ENCODE measurements at regions of chr6 and their contacts with region 1.

Region 1: DNA sequence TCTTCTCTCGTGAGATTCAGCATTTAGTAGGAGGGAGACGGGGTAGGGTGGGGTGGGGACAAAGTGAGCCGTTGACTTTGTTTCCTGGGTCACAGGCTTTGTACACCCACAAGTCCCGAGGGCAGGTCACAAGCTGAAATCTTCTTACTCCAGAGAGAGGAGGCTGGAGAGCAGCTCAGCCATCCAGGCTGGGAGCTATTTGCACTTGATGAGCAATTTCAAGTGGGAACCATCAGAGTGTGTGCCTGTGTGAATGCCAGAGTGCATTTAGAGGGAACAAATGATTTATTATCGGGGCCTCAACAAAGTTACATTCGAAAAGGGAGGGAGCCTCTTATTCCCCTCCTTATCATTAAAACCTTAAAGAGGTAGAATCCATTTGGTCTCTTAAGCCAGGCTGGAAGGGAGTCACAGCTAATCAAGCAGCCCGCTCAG is 155.7 kb upstream of the JARID2 start:
- DNase-seq: peak in 2 of 4 experiments; percentile 90 to 93
- ATAC-seq: peak; percentile 76
- H3K4me3 ChIP-seq: peak overlapping the region; percentile 48
- H3K27ac ChIP-seq: peak overlapping the region; percentile 96
- H3K4me1 ChIP-seq: peaks cover 28 to 49% of the 10 kb centered on the region in 2 experiments
- H3K27me3 ChIP-seq: no peaks in the 10 kb centered on the region; a peak in 1 of 5 replicates
- CTCF ChIP-seq: no peak
- EP300 ChIP-seq: peak; percentile 52
- POLR2A ChIP-seq: peak; percentile 82
- RAD21 ChIP-seq: peak; percentile 18 to 29; a peak in 2 of 4 replicates

Region 2: GRCh38 chr6:14734416-14735340 is 355.5 kb before region 1 on chr6:
- CTCF ChIA-PET with region 1: no interaction called
- POLR2A ChIA-PET with region 1: no interaction called
- in situ Hi-C with region 1: no loop called
- intact Hi-C with region 1: loop called (anchors 10 kb)
- DNase-seq: peak; percentile 70 to 95 (median 78)
- ATAC-seq: peak; percentile 90
- H3K4me3 ChIP-seq: no peak overlapping the region
- H3K27ac ChIP-seq: peak overlapping the region; percentile 93
- H3K4me1 ChIP-seq: peaks cover 6 to 64% of the 10 kb centered on the region in 2 experiments; a peak in 4 of 5 replicates
- H3K27me3 ChIP-seq: no peaks in the 10 kb centered on the region
- CTCF ChIP-seq: no peak
- EP300 ChIP-seq: peak; percentile 99
- POLR2A ChIP-seq: no peak
- RAD21 ChIP-seq: peak; percentile 42 to 48

Region 3: DNA sequence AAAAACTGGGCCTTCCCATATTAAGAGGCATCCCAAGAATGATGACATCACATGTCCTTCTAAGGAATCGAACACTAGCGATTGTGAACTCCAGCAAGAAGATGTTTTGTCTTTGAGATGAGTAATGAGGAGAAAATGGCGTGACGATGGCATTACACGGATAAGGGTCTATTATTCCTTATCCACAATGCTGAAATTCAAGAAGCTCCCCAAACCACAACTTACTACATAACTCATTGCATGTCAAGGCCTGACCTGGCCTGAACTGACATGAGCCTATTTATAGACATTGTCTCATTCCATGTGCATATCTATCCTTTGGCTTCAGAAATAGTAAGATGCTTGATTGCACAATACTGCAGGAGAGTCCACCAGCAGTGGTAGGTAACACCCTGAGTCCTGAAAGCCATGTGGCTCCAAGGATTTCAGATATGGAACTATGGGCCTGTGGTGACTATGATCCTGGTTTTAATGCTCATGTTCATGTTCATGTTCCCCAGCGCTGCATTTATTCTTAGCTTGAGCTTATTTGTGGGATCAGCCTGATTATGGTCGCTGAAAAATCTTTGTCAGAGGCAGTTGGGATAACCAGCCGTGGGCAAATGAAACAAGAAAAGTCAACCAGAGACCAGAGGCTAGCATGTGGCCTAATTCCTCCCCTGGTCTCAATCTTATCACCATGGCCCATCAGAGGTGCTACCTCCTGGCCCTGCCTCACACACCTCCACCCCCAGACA is 27.5 kb before region 1 on chr6:
- CTCF ChIA-PET with region 1: no interaction called
- POLR2A ChIA-PET with region 1: interaction called, 4 read pairs
- in situ Hi-C with region 1: no loop called
- intact Hi-C with region 1: loop called (anchors 2 kb)
- DNase-seq: peak; percentile 48 to 91 (median 68)
- ATAC-seq: peak; percentile 78
- H3K4me3 ChIP-seq: no peak overlapping the region
- H3K27ac ChIP-seq: peak overlapping the region; percentile 85
- H3K4me1 ChIP-seq: peaks cover 35 to 49% of the 10 kb centered on the region in 2 experiments
- H3K27me3 ChIP-seq: no peaks in the 10 kb centered on the region
- CTCF ChIP-seq: no peak
- EP300 ChIP-seq: peak; percentile 94
- POLR2A ChIP-seq: no peak
- RAD21 ChIP-seq: peak in 1 of 2 experiments; percentile 40; a peak in 3 of 4 replicates

Region 4: GRCh38 chr6:15102241-15102640 is 12.1 kb after region 1 on chr6:
- CTCF ChIA-PET with region 1: no interaction called
- POLR2A ChIA-PET with region 1: interaction called, 35 read pairs
- in situ Hi-C with region 1: no loop called
- intact Hi-C with region 1: no loop called
- DNase-seq: no peak
- ATAC-seq: no peak
- H3K4me3 ChIP-seq: no peak overlapping the region
- H3K27ac ChIP-seq: no peak overlapping the region
- H3K4me1 ChIP-seq: peaks cover 12 to 17% of the 10 kb centered on the region in 2 experiments; a peak in 4 of 5 replicates
- H3K27me3 ChIP-seq: no peaks in the 10 kb centered on the region
- CTCF ChIP-seq: no peak
- EP300 ChIP-seq: no peak
- POLR2A ChIP-seq: no peak
- RAD21 ChIP-seq: no peak

Region 5: DNA sequence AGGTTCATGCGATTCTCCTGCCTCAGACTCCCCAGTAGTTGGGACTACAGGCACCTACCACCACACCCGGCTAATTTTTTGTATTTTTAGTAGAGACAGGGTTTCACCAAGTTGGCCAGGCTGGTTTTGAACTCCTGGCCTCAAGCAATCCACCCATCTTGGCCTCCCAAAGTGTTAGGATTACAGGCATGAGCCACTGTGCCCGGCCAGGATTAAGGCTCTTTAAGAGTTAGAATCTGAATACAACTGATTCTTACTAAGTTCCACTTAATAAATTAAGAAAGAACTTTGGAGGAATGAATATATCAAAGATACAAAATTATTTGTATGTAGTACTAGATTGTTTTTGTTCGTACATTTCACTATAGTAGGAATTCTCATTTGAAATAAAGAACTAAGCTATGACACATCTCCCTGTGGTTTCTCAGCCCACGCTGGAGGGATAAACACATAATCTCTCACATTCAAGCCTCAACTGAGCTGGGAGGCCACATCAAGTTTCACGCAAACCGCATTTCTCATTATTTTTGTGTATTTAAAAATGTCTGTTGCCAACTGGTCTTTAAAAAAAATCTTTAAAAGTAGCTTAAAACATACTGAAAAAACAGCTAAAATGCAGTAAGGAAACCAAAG is 538.5 kb after region 1 on chr6:
- CTCF ChIA-PET with region 1: no interaction called
- POLR2A ChIA-PET with region 1: no interaction called
- in situ Hi-C with region 1: no loop called
- intact Hi-C with region 1: loop called (anchors 5 kb)
- DNase-seq: peak in 2 of 4 experiments; percentile 70 to 74
- ATAC-seq: peak; percentile 83
- H3K4me3 ChIP-seq: no peak overlapping the region
- H3K27ac ChIP-seq: peak overlapping the region; percentile 68
- H3K4me1 ChIP-seq: peaks cover 5 to 21% of the 10 kb centered on the region in 2 experiments; a peak in 3 of 5 replicates
- H3K27me3 ChIP-seq: no peaks in the 10 kb centered on the region
- CTCF ChIP-seq: no peak
- EP300 ChIP-seq: peak; percentile 43; the same call in 1 of the 2 replicates
- POLR2A ChIP-seq: no peak
- RAD21 ChIP-seq: no peak

Measured in K562 (cell line).